Caco-2 (cell line): ENCODE measurements at regions of chr16 and their contacts with region 1.

Region 1: GRCh38 chr16:21708533-21709115 is 44.9 kb downstream of the OTOA start:
- DNase-seq: peak; percentile 61 to 75
- H3K4me3 ChIP-seq: no peak overlapping the region
- H3K4me3 Mint-ChIP-seq: no peak overlapping the region
- H3K27ac Mint-ChIP-seq: no peak overlapping the region
- H3K4me1 ChIP-seq: no peaks in the 10 kb centered on the region
- H3K4me1 Mint-ChIP-seq: no peaks in the 10 kb centered on the region
- H3K27me3 ChIP-seq: no peaks in the 10 kb centered on the region
- H3K27me3 Mint-ChIP-seq: no peaks in the 10 kb centered on the region
- CTCF ChIP-seq: peak; percentile 54 to 76

Region 2: GRCh38 chr16:21656795-21657768 is 51.5 kb before region 1 on chr16:
- CTCF ChIA-PET with region 1: interaction called, 4 read pairs
- POLR2A ChIA-PET with region 1: no interaction called
- intact Hi-C with region 1: loop called (anchors 1 kb)
- DNase-seq: peak in 1 of 2 experiments; percentile 38
- H3K4me3 ChIP-seq: no peak overlapping the region
- H3K4me3 Mint-ChIP-seq: no peak overlapping the region
- H3K27ac Mint-ChIP-seq: no peak overlapping the region
- H3K4me1 ChIP-seq: no peaks in the 10 kb centered on the region
- H3K4me1 Mint-ChIP-seq: no peaks in the 10 kb centered on the region
- H3K27me3 ChIP-seq: no peaks in the 10 kb centered on the region
- H3K27me3 Mint-ChIP-seq: no peaks in the 10 kb centered on the region
- CTCF ChIP-seq: peak; percentile 50 to 69

Region 3: GRCh38 chr16:21684199-21684598 is 24.4 kb before region 1 on chr16:
- CTCF ChIA-PET with region 1: no interaction called
- POLR2A ChIA-PET with region 1: no interaction called
- intact Hi-C with region 1: no loop called
- DNase-seq: no peak
- H3K4me3 ChIP-seq: no peak overlapping the region
- H3K4me3 Mint-ChIP-seq: no peak overlapping the region
- H3K27ac Mint-ChIP-seq: no peak overlapping the region
- H3K4me1 ChIP-seq: no peaks in the 10 kb centered on the region
- H3K4me1 Mint-ChIP-seq: no peaks in the 10 kb centered on the region
- H3K27me3 ChIP-seq: no peaks in the 10 kb centered on the region
- H3K27me3 Mint-ChIP-seq: no peaks in the 10 kb centered on the region
- CTCF ChIP-seq: peak; percentile 17 to 48